ENCODE measurements at regions of chr2 and their contacts with region 1.

Region 1: DNA sequence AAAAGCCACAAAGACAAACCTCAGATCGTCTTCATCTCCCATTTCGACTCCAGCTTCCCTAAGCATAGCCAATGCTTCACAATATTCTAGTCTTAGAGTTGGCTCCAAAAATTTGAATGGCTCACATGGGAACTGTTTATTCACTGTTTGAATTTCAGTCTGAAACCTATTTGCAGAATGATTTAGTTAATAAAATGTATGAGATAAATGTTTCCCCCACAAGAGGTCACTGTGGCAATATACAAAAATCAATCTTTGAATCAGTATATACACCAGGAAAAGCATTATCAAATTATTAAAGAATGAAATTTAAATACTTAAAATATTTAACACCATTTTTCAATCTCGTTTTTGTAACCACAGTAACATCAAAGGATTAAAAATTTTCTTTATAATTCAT is 40.0 kb upstream of the MCM6 start:
- DNase-seq: no peak
- ATAC-seq: no peak
- H3K4me3 ChIP-seq: no peak overlapping the region
- H3K27ac ChIP-seq: no peak overlapping the region
- H3K4me1 ChIP-seq: no peaks in the 10 kb centered on the region
- H3K27me3 ChIP-seq: no peaks in the 10 kb centered on the region
- CTCF ChIP-seq: peak; percentile 58

Region 2: DNA sequence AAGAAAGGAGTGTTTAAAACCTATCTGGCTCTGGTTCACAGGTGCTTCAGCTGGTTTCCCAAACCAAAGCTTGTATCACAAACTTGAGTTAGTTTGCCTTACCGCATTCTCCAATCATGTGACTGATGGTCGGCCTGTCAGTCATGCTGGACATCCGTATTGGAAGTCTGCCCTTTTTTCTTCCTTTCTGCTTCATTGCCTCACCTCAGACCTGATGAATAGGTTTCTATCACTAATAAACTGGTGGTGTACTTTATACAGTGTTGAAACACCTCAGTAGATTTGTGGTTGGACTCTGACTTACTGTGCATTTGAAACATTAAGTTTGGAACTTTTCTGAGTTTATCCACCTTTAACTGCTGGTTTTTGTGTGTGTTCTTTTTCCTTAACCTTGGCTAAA is 300.8 kb before region 1 on chr2:
- intact Hi-C with region 1: no loop called
- DNase-seq: no peak
- ATAC-seq: no peak
- H3K4me3 ChIP-seq: no peak overlapping the region
- H3K27ac ChIP-seq: no peak overlapping the region
- H3K4me1 ChIP-seq: no peaks in the 10 kb centered on the region
- H3K27me3 ChIP-seq: no peaks in the 10 kb centered on the region
- CTCF ChIP-seq: no peak

Region 3: DNA sequence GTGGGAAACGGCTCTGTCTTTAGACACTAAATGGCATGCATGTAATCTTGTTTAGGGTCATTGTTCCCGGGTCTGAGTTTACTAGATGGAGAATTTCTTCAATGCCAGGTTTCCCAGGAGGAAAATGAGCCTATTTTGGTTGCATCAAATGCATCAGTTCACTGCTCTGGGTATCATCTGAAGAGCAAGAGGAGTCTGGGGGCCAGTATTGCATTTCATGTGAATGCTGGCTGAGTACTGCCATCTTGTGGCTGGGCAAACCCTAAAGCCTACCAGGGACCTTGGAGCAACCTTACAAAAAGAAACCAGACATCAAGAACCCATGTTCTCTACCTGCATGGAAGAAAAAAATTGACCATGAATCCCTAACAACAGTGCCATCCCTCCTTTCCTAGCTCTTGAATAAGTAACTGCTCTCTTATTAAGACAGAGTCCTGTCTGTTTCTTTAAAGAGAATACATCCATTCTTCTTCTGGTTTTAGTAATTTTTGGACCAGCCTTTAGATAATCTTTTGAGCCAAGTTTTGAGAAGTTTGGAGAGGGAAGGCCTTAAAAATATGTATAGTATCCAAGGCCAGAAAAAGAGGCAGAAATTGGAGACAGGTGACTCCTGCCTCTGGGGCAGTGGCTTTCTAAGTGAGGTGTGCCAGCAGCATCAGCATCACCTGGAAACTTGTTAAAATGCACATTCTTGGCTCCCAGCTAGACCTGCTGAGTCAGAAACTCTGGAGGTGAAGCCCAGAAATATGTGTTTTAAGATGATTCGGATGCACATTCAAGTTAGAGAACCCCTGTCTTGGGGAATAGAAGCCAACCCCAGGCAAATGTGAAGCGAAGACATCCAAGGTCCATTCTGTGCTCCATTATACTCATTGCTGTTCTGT is 462.7 kb after region 1 on chr2:
- intact Hi-C with region 1: loop called (anchors 5 kb)
- DNase-seq: no peak
- ATAC-seq: peak; percentile 83
- H3K4me3 ChIP-seq: no peak overlapping the region
- H3K27ac ChIP-seq: no peak overlapping the region
- H3K4me1 ChIP-seq: peaks cover 4% of the 10 kb centered on the region
- H3K27me3 ChIP-seq: no peaks in the 10 kb centered on the region
- CTCF ChIP-seq: peak; percentile 75

Measured in upper lobe of right lung (tissue), 1 donor.